Naive thymus-derived CD4-positive, alpha-beta T cell (primary cell): ENCODE measurements at regions of chr1 and their contacts with region 1.

Region 1: GRCh38 chr1:101520302-101520701 is 283.5 kb downstream of the S1PR1 start:
- DNase-seq: peak in 4 of 9 donors; percentile 4 to 14 (median 12)
- ATAC-seq: peak; percentile 38
- H3K4me3 ChIP-seq: no peak overlapping the region
- H3K4me3 Mint-ChIP-seq: no peak overlapping the region
- H3K27ac ChIP-seq: no peak overlapping the region
- H3K27ac Mint-ChIP-seq: no peak overlapping the region
- H3K4me1 ChIP-seq: no peaks in the 10 kb centered on the region
- H3K4me1 Mint-ChIP-seq: peaks cover 0 to 8% (median 4%) of the 10 kb centered on the region in 7 donors
- H3K27me3 ChIP-seq: no peaks in the 10 kb centered on the region
- H3K27me3 Mint-ChIP-seq: peaks cover 4 to 19% (median 7%) of the 10 kb centered on the region in 5 donors

Region 2: GRCh38 chr1:101667761-101668160 is 147.5 kb after region 1 on chr1:
- CTCF ChIA-PET with region 1: no interaction called
- POLR2A ChIA-PET with region 1: no interaction called
- intact Hi-C with region 1: no loop called
- DNase-seq: no peak
- ATAC-seq: no peak
- H3K4me3 ChIP-seq: no peak overlapping the region
- H3K4me3 Mint-ChIP-seq: no peak overlapping the region
- H3K27ac ChIP-seq: no peak overlapping the region
- H3K27ac Mint-ChIP-seq: no peak overlapping the region
- H3K4me1 ChIP-seq: no peaks in the 10 kb centered on the region
- H3K4me1 Mint-ChIP-seq: no peaks in the 10 kb centered on the region
- H3K27me3 ChIP-seq: no peaks in the 10 kb centered on the region
- H3K27me3 Mint-ChIP-seq: peaks cover 0 to 4% (median 0%) of the 10 kb centered on the region in 5 donors

Region 3: DNA sequence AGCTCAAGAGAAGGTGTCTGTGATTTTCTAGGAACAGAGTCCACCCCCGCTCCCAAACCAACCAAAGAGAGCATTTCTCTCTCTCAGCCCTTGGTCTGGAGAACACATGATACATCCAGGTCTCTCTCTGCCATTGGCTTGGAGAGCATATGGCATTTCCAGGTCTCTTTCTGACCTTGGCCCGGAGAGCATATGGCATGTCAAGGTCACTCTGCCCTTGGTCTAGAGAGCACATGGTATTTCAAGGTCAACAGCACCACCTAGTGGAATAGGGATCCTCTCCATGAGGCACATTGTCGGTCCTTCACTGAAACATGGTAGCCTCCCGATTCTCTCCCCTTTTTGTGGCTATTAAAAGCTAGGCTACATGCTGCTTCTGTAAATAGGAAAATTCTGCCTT is 914.1 kb after region 1 on chr1:
- CTCF ChIA-PET with region 1: no interaction called
- POLR2A ChIA-PET with region 1: no interaction called
- intact Hi-C with region 1: loop called in 1 of 2 experiments (anchors 5 kb)
- DNase-seq: peak in 1 of 9 donors; percentile 5
- ATAC-seq: no peak
- H3K4me3 ChIP-seq: no peak overlapping the region
- H3K4me3 Mint-ChIP-seq: no peak overlapping the region
- H3K27ac ChIP-seq: no peak overlapping the region
- H3K27ac Mint-ChIP-seq: no peak overlapping the region
- H3K4me1 ChIP-seq: no peaks in the 10 kb centered on the region
- H3K4me1 Mint-ChIP-seq: no peaks in the 10 kb centered on the region
- H3K27me3 ChIP-seq: no peaks in the 10 kb centered on the region
- H3K27me3 Mint-ChIP-seq: no peaks in the 10 kb centered on the region

Region 4: GRCh38 chr1:102970498-102971078 is 1450.3 kb after region 1 on chr1:
- CTCF ChIA-PET with region 1: no interaction called
- POLR2A ChIA-PET with region 1: no interaction called
- intact Hi-C with region 1: loop called (anchors 5 kb)
- DNase-seq: peak in 2 of 9 donors; percentile 1 to 15
- ATAC-seq: no peak
- H3K4me3 ChIP-seq: no peak overlapping the region
- H3K4me3 Mint-ChIP-seq: no peak overlapping the region
- H3K27ac ChIP-seq: no peak overlapping the region
- H3K27ac Mint-ChIP-seq: no peak overlapping the region
- H3K4me1 ChIP-seq: no peaks in the 10 kb centered on the region
- H3K4me1 Mint-ChIP-seq: no peaks in the 10 kb centered on the region
- H3K27me3 ChIP-seq: no peaks in the 10 kb centered on the region
- H3K27me3 Mint-ChIP-seq: no peaks in the 10 kb centered on the region